Ovary (tissue), 10 donors: ENCODE measurements at regions of chr5 and their contacts with region 1.

Region 1: DNA sequence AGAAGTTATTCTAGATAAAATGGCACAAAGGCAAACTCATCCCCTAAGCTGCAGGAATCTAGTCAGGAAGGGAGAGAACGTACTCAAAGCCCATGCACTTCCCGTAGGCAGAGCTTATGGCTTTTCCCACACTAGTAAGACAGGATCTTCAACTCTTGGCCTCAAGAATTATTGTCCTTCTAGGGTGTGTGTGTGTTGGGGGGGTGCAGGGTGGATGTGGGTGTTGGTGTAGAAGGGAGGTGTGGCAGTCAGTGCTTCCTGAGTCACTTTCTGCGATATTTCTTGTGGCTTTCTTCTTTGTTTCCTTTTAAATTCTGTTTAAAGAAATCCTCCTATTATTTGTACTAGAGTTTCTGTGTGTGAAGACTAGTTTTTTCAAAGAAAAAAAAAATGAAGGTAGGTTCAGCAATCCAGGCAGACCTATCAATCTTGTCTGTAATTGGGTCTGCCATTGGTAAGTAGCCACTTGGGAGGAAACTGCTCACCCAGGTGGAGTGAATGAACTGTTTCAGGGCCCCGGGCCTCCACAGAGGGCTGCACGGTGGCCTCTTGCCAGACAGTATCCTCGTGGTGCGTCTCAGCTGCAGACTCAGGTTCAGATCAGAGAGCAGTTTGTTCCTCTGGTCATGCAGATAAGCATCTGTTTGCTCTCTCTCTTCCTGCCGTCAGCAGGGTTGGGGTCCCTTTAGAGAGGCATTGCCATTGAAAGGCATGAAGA is 131.9 kb downstream of the NPR3 start:
- DNase-seq: no peak
- H3K4me3 ChIP-seq: no peak overlapping the region
- H3K27ac ChIP-seq: no peak overlapping the region
- H3K4me1 ChIP-seq: no peaks in the 10 kb centered on the region
- H3K27me3 ChIP-seq: no peaks in the 10 kb centered on the region
- CTCF ChIP-seq: no peak
- EP300 ChIP-seq: no peak
- POLR2A ChIP-seq: no peak

Region 2: GRCh38 chr5:32709781-32710549 is 133.0 kb before region 1 on chr5:
- intact Hi-C with region 1: loop called in 1 of 4 experiments (anchors 5 kb)
- DNase-seq: peak; percentile 28 to 77 (median 60)
- H3K4me3 ChIP-seq: peak overlapping the region; percentile 32
- H3K27ac ChIP-seq: peak overlapping the region in 1 of 2 donors; percentile 4
- H3K4me1 ChIP-seq: peaks cover 8% of the 10 kb centered on the region
- H3K27me3 ChIP-seq: no peaks in the 10 kb centered on the region
- CTCF ChIP-seq: peak in 2 of 3 donors; percentile 34
- EP300 ChIP-seq: no peak
- POLR2A ChIP-seq: no peak